ENCODE measurements at regions of chr7 and their contacts with region 1.

Region 1: DNA sequence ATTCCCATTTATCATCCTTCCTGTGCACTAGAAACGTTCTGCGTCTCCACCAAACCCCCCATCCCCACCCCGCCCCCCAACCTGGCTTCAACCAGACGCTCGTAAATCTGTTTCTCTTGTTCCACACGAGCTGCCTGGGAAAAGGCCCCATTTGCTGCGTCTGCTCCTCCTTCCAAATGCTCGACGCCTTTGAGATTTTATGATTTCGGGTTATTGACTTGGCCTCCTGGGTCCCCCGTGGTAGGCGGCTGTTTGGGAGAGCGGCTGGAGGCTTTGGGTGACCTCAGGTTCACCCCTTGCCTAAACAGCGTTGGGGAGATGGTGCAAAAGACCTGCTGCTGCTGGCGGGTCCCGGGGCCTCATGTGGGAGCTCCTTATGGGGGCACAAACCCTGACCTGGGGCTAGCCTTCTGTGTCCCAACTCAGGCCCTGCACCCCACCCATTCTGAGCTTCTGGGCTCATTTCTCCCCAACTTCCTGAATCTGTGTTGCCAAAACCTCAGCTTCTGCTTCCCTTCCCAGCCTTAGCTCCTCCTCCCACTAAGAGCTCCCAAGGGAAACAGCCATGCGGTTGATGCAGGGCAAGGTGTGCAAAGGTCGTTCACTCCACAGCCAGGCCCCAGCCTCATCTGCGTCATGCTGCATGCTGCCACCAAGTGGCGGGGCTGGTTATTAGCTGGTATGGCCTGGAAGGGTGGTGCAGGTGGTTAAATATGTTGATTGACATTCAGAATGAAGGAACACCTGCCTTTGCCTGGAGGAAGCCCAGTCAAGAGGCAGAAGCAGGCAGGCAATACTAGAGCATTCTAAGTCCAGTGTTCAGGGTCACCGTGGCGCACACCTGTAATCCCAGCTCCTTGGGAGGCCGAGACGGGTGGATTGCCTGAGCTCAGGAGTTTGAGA is 49.1 kb upstream of the ELN start:
- DNase-seq: peak; percentile 69 to 81
- ATAC-seq: peak; percentile 89 to 95 (median 94)
- H3K4me3 ChIP-seq: no peak overlapping the region
- H3K27ac ChIP-seq: no peak overlapping the region
- H3K4me1 ChIP-seq: peaks cover 4% of the 10 kb centered on the region
- H3K27me3 ChIP-seq: no peaks in the 10 kb centered on the region
- CTCF ChIP-seq: peak; percentile 62

Region 2: DNA sequence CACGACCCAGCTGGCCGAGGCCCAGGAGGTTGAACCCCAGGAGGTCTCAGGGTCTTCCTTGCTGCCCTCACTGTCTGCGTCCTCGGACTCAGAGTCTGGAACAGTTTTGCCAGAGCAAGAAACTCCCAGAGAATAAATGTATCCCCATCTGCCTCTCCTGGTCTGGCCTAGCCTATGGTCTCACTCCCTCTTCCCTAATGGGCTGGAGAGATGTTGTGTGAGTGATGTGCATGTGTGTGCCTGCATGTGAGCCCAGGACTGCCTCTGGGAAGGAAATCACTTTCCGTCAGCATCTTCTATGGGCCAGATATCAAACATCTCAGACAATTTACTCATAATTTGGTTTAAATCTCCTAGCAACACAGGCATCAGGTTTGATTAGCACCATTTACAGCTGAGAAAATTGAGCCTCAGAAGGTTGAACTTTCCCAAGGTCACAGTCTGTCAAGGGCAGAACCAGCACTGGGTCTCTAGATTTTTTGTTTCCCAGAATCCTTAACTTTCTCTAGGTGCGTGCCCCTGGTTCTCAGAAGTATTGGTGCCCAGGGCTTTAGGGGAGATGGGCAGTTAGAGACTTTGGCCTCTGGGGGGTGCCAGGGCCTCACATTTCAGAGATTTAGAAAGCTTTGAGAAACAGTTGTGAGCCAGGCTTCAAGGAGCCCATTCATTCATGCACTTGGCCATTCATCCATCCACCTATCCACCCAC is 113.0 kb before region 1 on chr7:
- intact Hi-C with region 1: loop called in 1 of 2 experiments (anchors 5 kb)
- DNase-seq: peak; percentile 51 to 69
- ATAC-seq: peak; percentile 68 to 90 (median 77)
- H3K4me3 ChIP-seq: no peak overlapping the region
- H3K27ac ChIP-seq: no peak overlapping the region
- H3K4me1 ChIP-seq: no peaks in the 10 kb centered on the region
- H3K27me3 ChIP-seq: no peaks in the 10 kb centered on the region
- CTCF ChIP-seq: peak; percentile 64

Region 3: DNA sequence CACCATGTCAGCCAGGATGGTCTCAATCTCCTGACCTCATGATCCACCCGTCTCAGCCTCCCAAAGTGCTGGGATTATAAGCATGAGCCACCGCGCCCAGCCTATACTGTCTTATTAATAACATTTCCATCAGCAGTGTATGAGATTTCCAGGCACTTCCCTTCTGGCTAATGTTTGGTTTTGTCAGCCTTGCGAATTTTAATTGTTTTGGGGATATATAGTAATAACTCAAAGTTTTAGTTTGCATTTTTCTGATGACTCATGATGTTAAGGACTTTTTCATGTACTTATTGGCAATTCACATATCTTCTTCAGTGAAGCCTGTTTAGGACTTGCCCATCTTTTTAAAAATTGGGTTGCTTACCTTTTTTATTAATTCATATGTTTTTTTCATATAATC is 41.9 kb before region 1 on chr7:
- intact Hi-C with region 1: no loop called
- DNase-seq: no peak
- ATAC-seq: no peak
- H3K4me3 ChIP-seq: no peak overlapping the region
- H3K27ac ChIP-seq: no peak overlapping the region
- H3K4me1 ChIP-seq: no peaks in the 10 kb centered on the region
- H3K27me3 ChIP-seq: no peaks in the 10 kb centered on the region
- CTCF ChIP-seq: no peak

Region 4: GRCh38 chr7:74026903-74027551 is 48.1 kb after region 1 on chr7:
- intact Hi-C with region 1: loop called in 1 of 2 experiments (anchors 5 kb)
- DNase-seq: peak; percentile 82 to 88
- ATAC-seq: peak; percentile 54 to 74 (median 69)
- H3K4me3 ChIP-seq: peak overlapping the region; percentile 58
- H3K27ac ChIP-seq: no peak overlapping the region
- H3K4me1 ChIP-seq: peaks cover 22% of the 10 kb centered on the region
- H3K27me3 ChIP-seq: peaks cover 0 to 5% (median 0%) of the 10 kb centered on the region in 3 donors
- CTCF ChIP-seq: peak; percentile 91

Region 5: DNA sequence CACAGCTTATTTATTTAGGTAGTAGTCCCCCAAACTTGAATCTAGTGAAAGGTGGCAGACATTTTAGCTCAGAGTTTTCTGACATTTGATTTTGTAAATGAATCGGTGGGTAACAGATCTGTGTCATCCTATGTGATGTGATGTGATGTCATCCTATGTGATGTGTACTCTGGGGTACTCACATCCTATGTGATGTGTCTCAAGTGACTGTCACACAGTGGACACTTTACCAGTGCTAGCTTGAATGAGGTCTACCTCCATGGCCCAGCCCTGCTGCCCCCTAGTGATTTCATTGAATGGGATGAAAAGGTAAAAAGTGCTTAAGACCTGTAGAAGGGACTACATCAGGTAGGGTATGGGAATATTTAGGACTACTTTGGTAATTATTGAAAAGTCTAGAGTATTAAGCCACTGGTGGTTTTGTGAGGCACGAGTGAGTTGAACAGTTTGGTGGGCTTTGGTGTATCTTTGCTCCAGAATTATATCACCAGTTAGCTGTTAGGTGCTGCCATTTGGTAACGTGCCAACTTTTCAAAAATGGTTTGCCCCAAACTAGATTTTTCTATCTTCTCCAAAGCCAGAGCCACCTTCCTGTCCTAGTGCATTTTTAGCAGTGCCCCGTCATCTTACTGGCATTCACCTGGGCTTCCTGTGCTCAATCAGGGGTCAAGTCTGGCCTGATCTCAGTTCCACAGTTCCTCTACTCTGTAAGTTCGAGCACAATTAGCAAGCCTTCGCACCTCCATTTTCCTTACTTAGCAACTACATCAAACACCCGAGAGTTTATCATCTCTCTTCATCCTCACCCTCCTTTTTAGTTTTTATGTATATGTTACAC is 204.9 kb after region 1 on chr7:
- intact Hi-C with region 1: no loop called
- DNase-seq: no peak
- ATAC-seq: no peak
- H3K4me3 ChIP-seq: peak overlapping the region; percentile 1
- H3K27ac ChIP-seq: peak overlapping the region; percentile 74
- H3K4me1 ChIP-seq: peaks cover 100% of the 10 kb centered on the region
- H3K27me3 ChIP-seq: no peaks in the 10 kb centered on the region
- CTCF ChIP-seq: peak; percentile 11

Measured in psoas muscle (tissue), 8 donors.